Gastrocnemius medialis (tissue), 4 donors: ENCODE measurements at regions of chr15 and their contacts with region 1.

Region 1: GRCh38 chr15:71443538-71443937 is 328.3 kb downstream of the THSD4 start:
- DNase-seq: peak in 1 of 2 donors; percentile 21
- ATAC-seq: peak in 1 of 2 donors; percentile 21
- H3K4me3 ChIP-seq: no peak overlapping the region
- H3K27ac ChIP-seq: no peak overlapping the region
- H3K4me1 ChIP-seq: peaks cover 0 to 3% of the 10 kb centered on the region in 2 donors
- H3K27me3 ChIP-seq: no peaks in the 10 kb centered on the region
- CTCF ChIP-seq: peak; percentile 63 to 85 (median 72)
- POLR2A ChIP-seq: no peak

Region 2: DNA sequence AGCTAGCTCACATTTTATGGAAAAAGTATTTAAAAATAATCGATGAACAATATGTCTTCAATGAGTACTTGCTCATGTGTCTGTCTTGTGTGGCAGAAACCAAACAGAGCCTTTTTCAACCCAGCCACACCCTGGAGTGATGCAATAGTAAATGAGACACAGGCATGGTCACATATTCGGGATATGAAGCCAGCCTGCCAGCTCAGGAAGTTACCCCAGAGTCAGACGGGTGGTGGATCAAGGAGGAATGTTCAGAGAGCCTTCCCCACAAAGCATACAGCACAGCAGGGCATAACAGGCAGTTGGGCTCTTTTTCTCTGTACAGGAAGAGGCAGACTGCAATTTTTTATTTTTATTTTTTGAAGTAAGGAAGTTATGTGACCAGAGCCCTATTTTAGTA is 616.9 kb before region 1 on chr15:
- in situ Hi-C with region 1: no loop called
- intact Hi-C with region 1: loop called (anchors 5 kb)
- DNase-seq: peak; percentile 44 to 67
- ATAC-seq: peak; percentile 50 to 60
- H3K4me3 ChIP-seq: no peak overlapping the region
- H3K27ac ChIP-seq: peak overlapping the region; percentile 36 to 52 (median 50)
- H3K4me1 ChIP-seq: peaks cover 7 to 28% of the 10 kb centered on the region in 2 donors
- H3K27me3 ChIP-seq: no peaks in the 10 kb centered on the region
- CTCF ChIP-seq: no peak
- POLR2A ChIP-seq: no peak

Region 3: DNA sequence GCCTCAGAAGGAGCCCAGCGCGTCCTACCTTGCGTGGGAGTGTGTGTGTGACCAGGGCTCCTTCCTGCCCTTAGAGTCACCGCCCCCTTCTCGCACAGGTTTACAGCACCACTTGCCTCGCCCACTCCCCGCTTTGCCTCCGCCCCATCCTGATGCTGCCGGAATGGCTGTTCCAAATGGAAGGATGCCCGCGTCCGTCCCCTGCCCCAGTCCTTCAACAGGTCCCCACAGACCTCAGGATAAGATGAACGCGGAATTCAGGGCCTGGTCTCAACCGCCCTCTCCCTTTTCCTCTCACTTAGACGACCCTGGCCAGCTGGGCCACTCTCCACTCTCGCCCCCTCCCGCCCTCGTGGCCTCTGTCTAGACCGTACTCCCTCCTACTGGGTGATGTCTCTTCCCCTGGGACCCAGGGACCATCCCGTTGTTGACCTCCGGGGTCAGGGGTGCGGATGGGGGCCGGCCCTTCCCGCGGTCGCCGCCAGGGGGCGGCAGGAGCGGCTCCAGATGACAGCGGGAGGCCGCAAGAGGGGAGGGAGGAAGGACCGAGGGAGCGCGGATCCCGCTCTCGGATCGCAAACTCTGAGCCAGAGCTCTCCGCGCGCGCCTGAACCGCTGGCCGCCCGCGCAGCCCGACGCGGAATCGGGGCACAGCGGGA is 328.5 kb before region 1 on chr15 and contains the start of gene THSD4:
- in situ Hi-C with region 1: loop called (anchors 5 to 10 kb)
- intact Hi-C with region 1: loop called (anchors 1 kb)
- DNase-seq: peak; percentile 18 to 60
- ATAC-seq: peak; percentile 73 to 89
- H3K4me3 ChIP-seq: peak within 1 kb of the TSS; percentile 60 to 71 (median 64)
- H3K27ac ChIP-seq: peak within 1 kb of the TSS in 3 of 4 donors; percentile 65 to 79 (median 76)
- H3K4me1 ChIP-seq: peaks cover 10 to 13% of the 10 kb centered on the region in 2 donors
- H3K27me3 ChIP-seq: no peaks in the 10 kb centered on the region
- CTCF ChIP-seq: peak; percentile 93 to 99 (median 96)
- POLR2A ChIP-seq: no peak
- total RNA-seq, gene THSD4: 0.35 to 3.1 (median 0.60) TPM

Region 4: GRCh38 chr15:71379893-71380292 is 63.6 kb before region 1 on chr15:
- in situ Hi-C with region 1: loop called in 2 of 4 experiments (anchors 5 to 10 kb)
- intact Hi-C with region 1: no loop called
- DNase-seq: no peak
- ATAC-seq: no peak
- H3K4me3 ChIP-seq: no peak overlapping the region
- H3K27ac ChIP-seq: no peak overlapping the region
- H3K4me1 ChIP-seq: peaks cover 2 to 5% of the 10 kb centered on the region in 2 donors
- H3K27me3 ChIP-seq: no peaks in the 10 kb centered on the region
- CTCF ChIP-seq: no peak
- POLR2A ChIP-seq: no peak

Region 5: GRCh38 chr15:71471347-71471746 is 27.8 kb after region 1 on chr15:
- in situ Hi-C with region 1: no loop called
- intact Hi-C with region 1: loop called (anchors 1 kb)
- DNase-seq: no peak
- ATAC-seq: no peak
- H3K4me3 ChIP-seq: no peak overlapping the region
- H3K27ac ChIP-seq: no peak overlapping the region
- H3K4me1 ChIP-seq: no peaks in the 10 kb centered on the region
- H3K27me3 ChIP-seq: no peaks in the 10 kb centered on the region
- CTCF ChIP-seq: no peak
- POLR2A ChIP-seq: no peak

Region 6: DNA sequence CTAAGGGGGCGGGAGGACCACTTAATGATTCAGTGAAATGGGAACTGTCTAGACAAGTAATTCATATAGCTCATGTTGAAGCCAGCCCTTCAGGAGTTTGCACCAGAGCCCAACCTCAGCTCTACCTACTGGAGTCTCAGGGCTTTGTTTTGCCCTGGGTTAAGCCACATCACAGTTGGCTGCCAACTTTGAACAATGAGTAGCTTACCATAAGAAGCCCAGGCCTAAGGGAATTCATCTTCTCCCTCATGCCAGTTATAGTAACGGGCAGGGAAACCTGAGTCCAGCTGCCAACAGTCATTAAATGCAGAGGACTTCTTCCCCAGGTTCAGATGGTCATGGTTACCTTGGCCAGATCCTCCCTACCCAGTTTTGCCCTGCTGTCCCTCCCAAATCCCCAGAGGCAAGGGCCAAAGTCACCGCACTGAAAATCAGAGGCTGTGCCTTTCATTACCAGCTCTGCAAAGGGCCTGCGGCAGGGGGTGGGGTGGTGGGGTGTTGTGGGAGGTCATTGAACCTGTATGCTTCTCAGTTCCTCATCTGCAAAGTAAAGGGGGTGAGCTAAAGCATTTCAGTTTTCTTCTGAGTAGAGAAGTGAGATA is 64.6 kb after region 1 on chr15:
- in situ Hi-C with region 1: no loop called
- intact Hi-C with region 1: no loop called
- DNase-seq: no peak
- ATAC-seq: no peak
- H3K4me3 ChIP-seq: no peak overlapping the region
- H3K27ac ChIP-seq: no peak overlapping the region
- H3K4me1 ChIP-seq: peaks cover 0 to 5% of the 10 kb centered on the region in 2 donors
- H3K27me3 ChIP-seq: no peaks in the 10 kb centered on the region
- CTCF ChIP-seq: no peak
- POLR2A ChIP-seq: no peak